ENCODE measurements at regions of chr1 and their contacts with region 1.

Region 1: DNA sequence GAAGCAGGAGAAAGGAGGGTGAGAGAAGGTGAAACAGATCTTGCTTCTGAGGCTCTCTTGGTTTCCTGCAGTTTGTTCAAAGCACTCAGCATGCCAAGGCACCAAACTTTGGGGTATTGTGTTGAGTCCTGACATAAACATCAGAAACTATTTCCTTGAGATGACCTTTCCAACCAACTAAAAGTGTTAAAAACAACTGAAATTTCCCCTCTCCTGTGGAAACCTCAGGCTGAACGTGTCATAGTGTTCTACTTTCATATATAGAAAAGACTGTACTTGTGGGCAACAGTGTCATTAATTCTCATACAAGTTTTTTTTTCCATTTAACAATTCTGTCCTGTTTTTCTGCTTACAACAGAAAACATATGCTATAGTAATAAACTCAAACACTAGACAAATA is 6.3 kb upstream of the LYST start:
- DNase-seq: no peak
- H3K4me3 Mint-ChIP-seq: peak overlapping the region; percentile 70
- H3K27ac Mint-ChIP-seq: peak overlapping the region; percentile 98
- H3K4me1 Mint-ChIP-seq: peaks cover 61% of the 10 kb centered on the region
- H3K27me3 Mint-ChIP-seq: no peaks in the 10 kb centered on the region

Region 2: GRCh38 chr1:235954306-235955283 is 81.5 kb after region 1 on chr1:
- intact Hi-C with region 1: loop called (anchors 5 kb)
- DNase-seq: peak; percentile 15
- H3K4me3 Mint-ChIP-seq: no peak overlapping the region
- H3K27ac Mint-ChIP-seq: no peak overlapping the region
- H3K4me1 Mint-ChIP-seq: peaks cover 33% of the 10 kb centered on the region
- H3K27me3 Mint-ChIP-seq: no peaks in the 10 kb centered on the region

Measured in activated T-helper 2 cell treated with anti-CD3 and anti-CD28 coated beads, Interferon-gamma antibody, Interleukin-2, Interleukin-4, amounts not matched to agents 10 μg/mL and 5 μg/mL and 100 μg/mL, durations not matched to agents 14 hours and 24 hours and 36 hours (primary cell).